Activated T-helper 2 cell treated with anti-CD3 and anti-CD28 coated beads, Interferon-gamma antibody, Interleukin-2, Interleukin-4, amounts not matched to agents 10 μg/mL and 5 μg/mL and 100 μg/mL, durations not matched to agents 14 hours and 24 hours and 36 hours (primary cell): ENCODE measurements at regions of chr11 and their contacts with region 1.

Region 1: GRCh38 chr11:111944651-111945051 is 7.5 kb downstream of the DIXDC1 start:
- DNase-seq: no peak
- H3K4me3 Mint-ChIP-seq: peak overlapping the region; percentile 66
- H3K27ac Mint-ChIP-seq: peak overlapping the region; percentile 98
- H3K4me1 Mint-ChIP-seq: peaks cover 45% of the 10 kb centered on the region
- H3K27me3 Mint-ChIP-seq: no peaks in the 10 kb centered on the region

Region 2: GRCh38 chr11:111561791-111562325 is 382.8 kb before region 1 on chr11:
- intact Hi-C with region 1: no loop called
- DNase-seq: no peak
- H3K4me3 Mint-ChIP-seq: no peak overlapping the region
- H3K27ac Mint-ChIP-seq: no peak overlapping the region
- H3K4me1 Mint-ChIP-seq: no peaks in the 10 kb centered on the region
- H3K27me3 Mint-ChIP-seq: peaks cover 2% of the 10 kb centered on the region

Region 3: DNA sequence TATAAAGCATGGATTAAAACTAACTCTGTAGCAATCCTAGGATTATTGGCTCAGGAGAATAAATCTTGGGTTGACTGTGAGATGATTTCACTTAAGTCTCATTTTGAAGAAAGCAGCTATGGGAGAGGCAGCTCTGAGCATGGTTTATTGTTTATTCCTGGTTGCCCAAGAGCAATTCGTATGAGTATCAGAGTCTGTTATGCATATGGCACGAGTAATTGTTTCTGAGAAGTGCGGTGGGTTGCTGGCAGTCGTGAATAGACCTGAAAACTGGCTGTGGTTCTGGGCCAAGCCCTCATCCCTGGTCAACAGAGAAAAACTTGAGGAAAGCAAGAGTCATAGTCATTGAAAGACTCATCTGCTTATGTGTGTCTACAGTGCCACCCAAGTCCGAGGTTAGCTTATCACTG is 19.3 kb after region 1 on chr11:
- intact Hi-C with region 1: loop called (anchors 1 kb)
- DNase-seq: no peak
- H3K4me3 Mint-ChIP-seq: no peak overlapping the region
- H3K27ac Mint-ChIP-seq: peak overlapping the region; percentile 61
- H3K4me1 Mint-ChIP-seq: peaks cover 4% of the 10 kb centered on the region
- H3K27me3 Mint-ChIP-seq: no peaks in the 10 kb centered on the region